HCT116 (cell line): ENCODE measurements at regions of chr18 and their contacts with region 1.

Region 1: DNA sequence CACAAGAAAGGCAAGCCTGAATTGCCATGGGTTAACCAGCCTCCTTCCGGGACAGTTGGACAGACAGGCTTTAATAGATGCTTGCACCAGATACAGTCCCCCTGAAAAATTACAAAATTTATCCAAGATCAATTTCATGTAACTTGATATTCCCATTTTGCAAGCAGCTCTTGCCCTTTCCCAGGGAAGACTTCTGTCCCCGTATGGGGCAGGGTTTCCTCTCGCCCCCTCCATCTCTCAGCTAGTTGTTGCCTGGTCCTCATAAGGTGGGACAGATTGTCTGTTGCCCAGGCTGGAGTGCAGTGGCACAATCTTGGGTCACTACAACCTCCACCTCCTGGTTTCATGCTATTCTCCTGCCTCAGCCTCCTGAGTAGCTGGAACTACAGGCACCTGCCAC is 61.2 kb downstream of the TTC39C start:
- DNase-seq: peak; percentile 4
- ATAC-seq: peak; percentile 43
- H3K4me3 ChIP-seq: no peak overlapping the region
- H3K27ac ChIP-seq: peak overlapping the region; percentile 46
- H3K4me1 ChIP-seq: peaks cover 17 to 20% of the 10 kb centered on the region in 2 experiments
- H3K27me3 ChIP-seq: no peaks in the 10 kb centered on the region
- CTCF ChIP-seq: no peak
- POLR2A ChIP-seq: no peak
- RAD21 ChIP-seq: no peak

Region 2: GRCh38 chr18:23890589-23890988 is 185.1 kb before region 1 on chr18:
- CTCF ChIA-PET with region 1: no interaction called
- POLR2A ChIA-PET with region 1: no interaction called
- RAD21 ChIA-PET with region 1: no interaction called
- intact Hi-C with region 1: no loop called
- DNase-seq: no peak
- ATAC-seq: no peak
- H3K4me3 ChIP-seq: no peak overlapping the region
- H3K27ac ChIP-seq: no peak overlapping the region
- H3K4me1 ChIP-seq: peaks cover 4 to 9% of the 10 kb centered on the region in 2 experiments
- H3K27me3 ChIP-seq: no peaks in the 10 kb centered on the region
- CTCF ChIP-seq: no peak
- POLR2A ChIP-seq: no peak
- RAD21 ChIP-seq: no peak

Region 3: DNA sequence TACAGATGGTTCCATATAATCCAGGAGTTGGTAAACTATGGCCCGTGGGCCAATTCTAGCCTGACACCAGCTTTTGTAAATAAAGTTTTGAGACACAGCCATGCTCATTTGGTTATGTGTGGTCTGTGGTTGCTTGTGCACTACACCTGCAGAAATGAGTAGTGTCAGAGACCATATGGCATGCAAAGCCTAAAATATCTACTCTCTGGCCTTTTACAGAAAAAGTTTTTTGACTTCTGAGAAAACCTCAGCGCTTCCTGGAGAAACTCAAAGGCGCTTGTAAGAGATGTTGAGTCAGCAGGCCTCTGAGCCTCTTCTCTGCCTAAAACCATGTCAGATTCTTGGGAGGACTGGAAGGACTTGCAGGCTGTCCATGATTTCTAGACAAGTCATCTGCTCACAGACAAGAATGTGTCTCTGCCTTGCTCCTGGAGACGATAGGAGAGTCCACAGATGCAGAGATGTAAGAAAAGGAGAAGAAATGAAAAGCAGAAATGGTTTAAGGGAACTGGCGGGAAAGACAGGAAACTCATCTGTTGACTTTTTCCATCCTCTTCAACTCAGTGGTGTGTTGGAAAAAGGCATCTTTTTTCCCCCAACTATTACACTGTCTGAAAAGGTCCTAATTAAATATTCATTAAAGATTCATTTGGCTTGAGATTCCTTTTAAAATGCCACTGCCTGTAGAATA is 55.9 kb before region 1 on chr18:
- CTCF ChIA-PET with region 1: no interaction called
- POLR2A ChIA-PET with region 1: interaction called, 4 read pairs
- RAD21 ChIA-PET with region 1: no interaction called
- intact Hi-C with region 1: loop called (anchors 10 kb)
- DNase-seq: no peak
- ATAC-seq: no peak
- H3K4me3 ChIP-seq: no peak overlapping the region
- H3K27ac ChIP-seq: no peak overlapping the region
- H3K4me1 ChIP-seq: peaks cover 9 to 22% of the 10 kb centered on the region in 2 experiments; a peak in 3 of 4 replicates
- H3K27me3 ChIP-seq: no peaks in the 10 kb centered on the region
- CTCF ChIP-seq: no peak
- POLR2A ChIP-seq: no peak
- RAD21 ChIP-seq: no peak